ENCODE measurements at regions of chr6 and their contacts with region 1.

Region 1: GRCh38 chr6:148947621-148948444 is 201.0 kb downstream of the UST start:
- DNase-seq: peak; percentile 76 to 84 (median 81)
- ATAC-seq: peak; percentile 72 to 94 (median 90)
- H3K4me3 ChIP-seq: no peak overlapping the region
- H3K27ac ChIP-seq: no peak overlapping the region
- H3K4me1 ChIP-seq: peaks cover 0 to 12% (median 0%) of the 10 kb centered on the region in 12 donors
- H3K27me3 ChIP-seq: no peaks in the 10 kb centered on the region
- CTCF ChIP-seq: peak; percentile 72 to 93 (median 89)
- POLR2A ChIP-seq: no peak

Region 2: DNA sequence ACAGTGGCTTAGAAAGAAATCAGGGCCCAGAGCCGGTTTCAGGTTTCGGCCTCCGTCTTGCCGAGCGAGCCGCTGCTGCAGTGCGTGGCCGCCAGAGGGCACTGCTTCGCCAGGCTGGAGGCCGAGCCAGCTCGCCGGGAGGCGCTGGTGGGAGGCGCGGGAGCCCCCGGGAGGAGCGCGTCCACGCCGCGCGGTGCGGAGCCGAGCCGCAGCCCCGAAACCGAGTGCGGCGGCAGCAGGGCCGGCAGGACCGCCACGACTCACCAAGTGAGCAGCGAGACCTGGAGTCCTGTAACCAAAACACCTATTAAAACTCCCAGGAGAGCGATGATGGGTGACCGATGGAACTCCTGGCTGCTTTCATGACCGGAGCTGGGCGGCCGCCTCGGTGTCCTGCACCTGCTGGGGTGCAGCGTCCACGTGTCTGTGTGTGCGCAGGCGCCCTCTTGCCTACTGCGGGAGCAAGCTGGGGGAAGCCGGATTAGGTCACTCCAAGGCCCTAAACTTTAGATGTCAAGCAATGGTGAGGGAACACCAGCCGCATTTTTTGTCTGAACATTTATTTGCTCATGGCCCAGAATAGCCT is 387.9 kb before region 1 on chr6:
- intact Hi-C with region 1: loop called in 4 of 10 experiments (anchors 5 kb)
- DNase-seq: peak; percentile 71 to 89 (median 76)
- ATAC-seq: peak; percentile 57 to 93 (median 86)
- H3K4me3 ChIP-seq: peak overlapping the region; percentile 37 to 67 (median 53)
- H3K27ac ChIP-seq: peak overlapping the region in 5 of 12 donors; percentile 25 to 65 (median 44)
- H3K4me1 ChIP-seq: peaks cover 0 to 22% (median 7%) of the 10 kb centered on the region in 12 donors
- H3K27me3 ChIP-seq: no peaks in the 10 kb centered on the region
- CTCF ChIP-seq: peak; percentile 93 to 99 (median 98)
- POLR2A ChIP-seq: no peak

Region 3: GRCh38 chr6:148578245-148578732 is 369.5 kb before region 1 on chr6:
- intact Hi-C with region 1: loop called (anchors 1 to 5 kb)
- DNase-seq: peak; percentile 73 to 87 (median 84)
- ATAC-seq: peak; percentile 96 to 100 (median 100)
- H3K4me3 ChIP-seq: no peak overlapping the region
- H3K27ac ChIP-seq: no peak overlapping the region
- H3K4me1 ChIP-seq: peaks cover 0 to 5% (median 0%) of the 10 kb centered on the region in 12 donors
- H3K27me3 ChIP-seq: peaks cover 0 to 5% (median 0%) of the 10 kb centered on the region in 9 donors
- CTCF ChIP-seq: peak; percentile 55 to 95 (median 78)
- POLR2A ChIP-seq: no peak

Region 4: DNA sequence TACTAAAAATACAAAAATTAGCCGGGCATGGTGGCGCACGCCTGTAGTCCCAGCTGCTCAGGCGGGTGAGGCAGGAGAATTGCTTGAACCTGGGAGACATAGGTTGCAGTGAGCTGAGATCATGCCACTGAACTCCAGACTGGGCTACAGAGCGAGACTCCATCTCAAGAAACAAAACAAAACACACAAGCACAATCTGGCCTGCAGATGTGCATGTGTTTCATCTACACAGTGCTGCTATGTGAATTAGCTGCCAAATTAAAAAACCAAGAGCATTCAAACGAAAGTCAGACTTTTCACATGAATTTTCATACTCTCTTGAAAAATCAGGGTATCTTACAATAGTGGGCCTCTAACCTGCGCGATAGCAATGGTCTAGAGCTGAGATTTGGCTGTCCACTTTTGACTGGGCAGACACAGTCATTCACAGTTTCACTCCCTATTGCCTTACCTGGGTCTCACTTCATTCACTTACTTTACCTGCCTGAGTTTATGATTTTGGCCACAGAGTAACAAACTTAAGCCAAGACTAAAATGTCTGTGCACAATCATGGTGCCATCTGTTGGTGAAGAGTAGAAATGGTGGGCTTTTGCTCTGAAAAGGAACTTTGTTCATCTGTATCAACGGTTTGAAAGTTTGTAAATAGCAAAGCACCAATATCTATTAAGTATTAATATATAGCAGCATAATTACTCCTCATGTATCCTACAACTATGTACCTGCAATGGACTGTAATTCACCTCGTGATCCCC is 339.5 kb before region 1 on chr6:
- intact Hi-C with region 1: no loop called
- DNase-seq: no peak
- ATAC-seq: no peak
- H3K4me3 ChIP-seq: no peak overlapping the region
- H3K27ac ChIP-seq: no peak overlapping the region
- H3K4me1 ChIP-seq: peaks cover 0 to 16% (median 4%) of the 10 kb centered on the region in 12 donors
- H3K27me3 ChIP-seq: no peaks in the 10 kb centered on the region
- CTCF ChIP-seq: peak in 8 of 12 donors; percentile 14 to 46 (median 32)
- POLR2A ChIP-seq: no peak

Region 5: DNA sequence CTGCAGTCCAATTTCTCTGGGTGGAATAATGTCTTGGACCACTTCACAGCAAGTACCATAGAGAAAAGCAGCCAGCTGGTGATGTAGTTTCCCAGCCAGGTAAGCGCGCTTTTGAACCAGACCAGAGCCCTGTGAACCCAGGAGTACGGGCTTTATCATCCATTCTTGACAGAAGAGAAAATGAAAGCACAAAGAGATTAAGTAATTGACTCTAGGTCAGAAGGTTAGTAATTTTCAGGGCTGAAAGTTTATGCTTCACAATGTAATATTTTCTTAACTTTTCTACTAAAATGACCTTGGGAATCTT is 208.1 kb before region 1 on chr6:
- intact Hi-C with region 1: loop called in 1 of 10 experiments (anchors 5 kb)
- DNase-seq: no peak
- ATAC-seq: no peak
- H3K4me3 ChIP-seq: no peak overlapping the region
- H3K27ac ChIP-seq: no peak overlapping the region
- H3K4me1 ChIP-seq: no peaks in the 10 kb centered on the region
- H3K27me3 ChIP-seq: no peaks in the 10 kb centered on the region
- CTCF ChIP-seq: no peak
- POLR2A ChIP-seq: no peak

Region 6: DNA sequence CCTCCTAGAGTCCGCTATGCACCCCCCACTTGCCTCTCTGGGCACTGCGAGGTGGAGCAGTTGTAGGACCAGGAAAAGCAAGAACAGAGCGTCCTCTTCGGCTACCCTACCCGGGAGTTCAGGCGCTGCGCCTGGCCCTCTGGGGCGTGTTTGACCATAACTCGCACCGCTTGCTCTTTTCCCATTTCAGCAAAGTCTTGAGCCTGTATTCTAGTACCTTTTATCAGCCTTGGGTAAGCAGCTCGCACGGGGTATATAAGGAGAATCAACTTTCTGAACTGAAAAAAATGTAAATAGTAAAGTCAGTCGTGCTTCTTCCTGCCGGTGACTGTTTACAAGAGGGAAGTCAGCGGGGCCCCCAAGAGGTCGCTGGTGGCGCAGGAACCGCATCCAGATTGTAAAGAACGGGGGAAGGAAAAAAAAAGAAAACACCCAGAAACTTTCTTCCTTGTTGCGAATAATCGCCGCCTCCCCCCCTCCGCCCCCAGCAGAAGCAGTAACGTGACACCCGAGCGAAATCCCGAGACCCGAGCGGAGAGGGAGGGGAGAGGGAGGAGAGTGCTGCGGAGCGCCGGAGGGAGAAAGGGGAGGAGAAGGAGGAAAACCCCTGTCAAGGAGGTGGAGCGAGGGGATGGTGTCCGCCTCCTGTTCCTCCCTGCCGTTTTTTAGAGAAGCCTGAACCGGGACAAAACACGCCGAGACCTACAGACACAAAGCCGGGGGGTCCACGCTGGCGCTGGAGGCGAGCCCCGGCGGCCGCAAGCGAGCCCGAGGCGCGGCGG is 201.3 kb before region 1 on chr6 and contains the start of gene UST:
- intact Hi-C with region 1: loop called (anchors 1 to 5 kb)
- DNase-seq: peak; percentile 80 to 87 (median 83)
- ATAC-seq: peak; percentile 89 to 92 (median 90)
- H3K4me3 ChIP-seq: peak within 1 kb of the TSS; percentile 51 to 91 (median 74)
- H3K27ac ChIP-seq: peak within 1 kb of the TSS; percentile 58 to 87 (median 82)
- H3K4me1 ChIP-seq: peaks cover 0 to 24% (median 8%) of the 10 kb centered on the region in 12 donors
- H3K27me3 ChIP-seq: peaks cover 0 to 17% (median 0%) of the 10 kb centered on the region in 9 donors
- CTCF ChIP-seq: peak in 9 of 12 donors; percentile 20 to 60 (median 43)
- POLR2A ChIP-seq: peak in 1 of 2 donors; percentile 44
- total RNA-seq, gene UST: 1.5 to 4.5 (median 2.7) TPM

Region 7: GRCh38 chr6:149190224-149190831 is 242.5 kb after region 1 on chr6:
- intact Hi-C with region 1: no loop called
- DNase-seq: peak in 1 of 5 donors; percentile 32
- ATAC-seq: no peak
- H3K4me3 ChIP-seq: no peak overlapping the region
- H3K27ac ChIP-seq: no peak overlapping the region
- H3K4me1 ChIP-seq: peaks cover 0 to 6% (median 0%) of the 10 kb centered on the region in 12 donors
- H3K27me3 ChIP-seq: peaks cover 0 to 4% (median 0%) of the 10 kb centered on the region in 9 donors
- CTCF ChIP-seq: no peak
- POLR2A ChIP-seq: no peak